Posterior vena cava (tissue), 2 donors: ENCODE measurements at regions of chr22 and their contacts with region 1.

Region 1: GRCh38 chr22:43197271-43197941 is 10.5 kb upstream of the TTLL12 start:
- DNase-seq: no peak

Region 2: DNA sequence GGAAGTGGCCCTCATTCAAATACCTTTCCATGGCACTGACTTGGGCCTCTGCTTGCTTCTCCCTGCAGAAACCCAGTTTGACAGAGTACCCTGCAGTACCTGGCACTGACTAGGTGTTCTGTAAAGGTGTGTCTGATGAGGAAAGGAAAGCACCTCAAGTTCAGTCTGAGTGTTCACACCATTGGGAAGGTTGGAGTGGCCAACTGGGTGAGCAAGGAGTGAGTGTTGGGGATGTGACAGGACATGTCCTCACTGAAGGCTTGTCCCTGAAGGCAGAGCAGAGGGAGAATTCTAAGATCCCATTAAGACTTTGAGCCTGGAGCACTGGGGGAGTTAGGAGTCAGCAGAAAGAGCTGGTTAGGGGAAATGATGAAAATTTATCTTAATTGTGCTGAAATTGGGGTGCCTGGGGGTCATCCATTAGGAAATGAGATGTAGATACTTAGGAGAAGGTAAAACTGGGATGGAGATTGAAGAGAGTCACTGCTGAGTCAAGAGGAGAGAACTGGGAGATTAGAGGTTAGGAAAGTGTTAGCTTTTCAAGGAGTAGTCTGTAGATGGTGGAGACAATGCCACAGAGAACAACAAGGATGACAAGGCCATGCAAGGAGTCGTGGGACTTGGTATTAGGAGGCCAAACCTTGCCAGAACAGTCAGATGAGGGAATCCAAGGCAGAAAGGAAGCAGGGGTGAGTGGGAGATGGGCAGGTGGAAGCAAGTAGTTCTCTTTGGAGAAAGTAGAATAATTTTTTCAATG is 1358.4 kb before region 1 on chr22:
- intact Hi-C with region 1: loop called in 1 of 2 experiments (anchors 5 kb)
- DNase-seq: no peak

Region 3: GRCh38 chr22:43151251-43152002 is 46.0 kb before region 1 on chr22 and contains the start of gene TSPO:
- intact Hi-C with region 1: loop called in 1 of 2 experiments (anchors 1 kb)
- DNase-seq: peak; percentile 93
- total RNA-seq, gene TSPO: 75.1 to 84.3 TPM

Region 4: DNA sequence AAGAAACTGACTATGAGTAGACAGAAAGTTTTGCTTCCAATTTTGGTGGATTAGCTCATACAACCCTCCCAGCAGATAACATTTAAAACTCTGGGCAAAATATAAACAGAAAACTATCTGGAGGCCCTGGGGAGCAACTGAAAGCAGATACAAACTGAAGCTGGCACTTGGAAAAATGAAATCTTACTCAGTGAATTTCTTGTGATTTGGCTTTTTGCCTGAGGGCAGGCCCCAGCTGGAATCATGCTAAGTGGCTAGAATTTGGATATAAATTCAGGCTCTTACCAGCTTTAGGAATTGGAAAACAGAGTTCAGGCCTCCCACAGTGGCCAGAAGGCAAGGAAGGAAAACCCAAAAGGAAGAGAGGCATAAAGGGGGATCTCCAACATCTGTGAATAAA is 528.9 kb after region 1 on chr22:
- intact Hi-C with region 1: loop called in 1 of 2 experiments (anchors 5 kb)
- DNase-seq: no peak